Vagina (tissue), 2 donors: ENCODE measurements at regions of chr3 and their contacts with region 1.

Region 1: DNA sequence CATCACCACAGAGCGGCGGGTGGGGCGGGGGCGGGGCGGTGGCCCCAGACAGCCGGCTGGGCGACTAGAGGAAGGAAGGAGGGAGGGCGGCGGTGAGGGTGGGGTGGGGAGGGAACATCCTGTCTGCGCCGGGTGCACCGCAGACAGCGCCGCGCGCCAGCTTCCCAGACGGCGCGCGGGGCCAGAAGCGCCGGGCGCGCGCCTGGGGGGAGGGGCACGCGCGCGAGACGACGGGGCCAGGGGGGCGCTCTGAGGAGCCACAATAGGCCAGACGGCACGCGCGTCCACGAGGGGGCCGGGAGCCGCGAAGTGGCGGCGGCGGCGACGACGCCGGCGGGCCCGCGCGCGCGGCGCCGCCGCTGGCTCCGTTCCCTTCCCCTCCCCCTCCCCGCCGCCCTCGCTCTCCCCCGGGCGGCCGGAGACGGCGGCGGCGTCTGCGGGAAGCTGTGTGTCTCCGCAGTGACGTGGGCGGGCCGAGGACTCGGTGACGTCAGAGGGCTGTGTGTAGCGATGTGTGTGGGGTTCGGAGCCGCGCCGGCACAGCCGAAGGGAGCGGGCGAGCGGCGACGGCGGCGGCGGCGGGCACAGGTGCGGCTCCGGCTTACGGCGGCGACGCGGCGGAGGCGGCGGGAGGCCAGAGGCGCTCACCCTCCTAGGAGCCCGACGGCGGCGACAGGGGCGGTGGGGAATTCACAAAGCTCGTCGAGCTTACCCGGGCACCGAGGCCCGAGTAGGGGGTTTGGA is at the start of gene SKIL:
- DNase-seq: peak in 1 of 2 donors; percentile 96
- H3K4me3 ChIP-seq: peak within 1 kb of the TSS; percentile 93 to 100
- H3K27ac ChIP-seq: peak within 1 kb of the TSS; percentile 99
- H3K4me1 ChIP-seq: peaks cover 53% of the 10 kb centered on the region
- H3K27me3 ChIP-seq: no peaks in the 10 kb centered on the region
- CTCF ChIP-seq: peak in 1 of 3 experiments; percentile 20
- POLR2A ChIP-seq: peak in 1 of 2 donors; percentile 74
- total RNA-seq, gene SKIL: 48.1 TPM

Region 2: GRCh38 chr3:170180908-170181879 is 176.2 kb before region 1 on chr3 and contains the start of gene PHC3:
- intact Hi-C with region 1: loop called (anchors 5 kb)
- DNase-seq: peak in 1 of 2 donors; percentile 93
- H3K4me3 ChIP-seq: peak within 1 kb of the TSS; percentile 86 to 98
- H3K27ac ChIP-seq: peak within 1 kb of the TSS; percentile 99
- H3K4me1 ChIP-seq: peaks cover 28% of the 10 kb centered on the region
- H3K27me3 ChIP-seq: no peaks in the 10 kb centered on the region
- CTCF ChIP-seq: peak in 1 of 3 experiments; percentile 18
- POLR2A ChIP-seq: peak in 1 of 2 donors; percentile 77
- total RNA-seq, gene PHC3: 46.9 TPM

Region 3: GRCh38 chr3:171116365-171116764 is 759.0 kb after region 1 on chr3:
- intact Hi-C with region 1: no loop called
- DNase-seq: no peak
- H3K4me3 ChIP-seq: no peak overlapping the region
- H3K27ac ChIP-seq: no peak overlapping the region
- H3K4me1 ChIP-seq: peaks cover 15% of the 10 kb centered on the region
- H3K27me3 ChIP-seq: no peaks in the 10 kb centered on the region
- CTCF ChIP-seq: no peak
- POLR2A ChIP-seq: no peak